ENCODE measurements at regions of chr1 and their contacts with region 1.

Region 1: DNA sequence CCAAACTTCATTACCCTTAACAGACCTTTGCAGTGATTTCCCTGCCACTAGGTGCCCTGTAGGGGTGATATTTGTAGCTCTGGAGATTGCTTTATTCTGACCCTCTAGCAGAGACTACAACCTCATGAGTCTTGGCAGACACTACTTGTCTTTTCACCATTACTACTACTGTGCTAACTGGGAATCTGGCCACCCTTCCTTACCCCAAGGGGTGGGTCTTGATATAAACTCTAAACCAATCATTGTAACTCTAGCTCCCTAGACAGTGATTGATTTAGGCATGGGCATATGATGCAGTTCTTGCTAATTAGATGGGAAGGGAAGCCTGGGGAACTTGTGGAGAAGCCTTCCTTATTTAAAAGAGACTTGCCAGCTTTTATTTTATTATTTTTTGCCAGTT is 3.9 kb downstream of the KPNA6 start:
- DNase-seq: no peak
- ATAC-seq: no peak
- H3K4me3 ChIP-seq: no peak overlapping the region
- H3K27ac ChIP-seq: no peak overlapping the region
- H3K4me1 ChIP-seq: peaks cover 31 to 60% of the 10 kb centered on the region in 2 experiments
- H3K27me3 ChIP-seq: no peaks in the 10 kb centered on the region
- CTCF ChIP-seq: no peak
- POLR2A ChIP-seq: no peak
- RAD21 ChIP-seq: no peak

Region 2: DNA sequence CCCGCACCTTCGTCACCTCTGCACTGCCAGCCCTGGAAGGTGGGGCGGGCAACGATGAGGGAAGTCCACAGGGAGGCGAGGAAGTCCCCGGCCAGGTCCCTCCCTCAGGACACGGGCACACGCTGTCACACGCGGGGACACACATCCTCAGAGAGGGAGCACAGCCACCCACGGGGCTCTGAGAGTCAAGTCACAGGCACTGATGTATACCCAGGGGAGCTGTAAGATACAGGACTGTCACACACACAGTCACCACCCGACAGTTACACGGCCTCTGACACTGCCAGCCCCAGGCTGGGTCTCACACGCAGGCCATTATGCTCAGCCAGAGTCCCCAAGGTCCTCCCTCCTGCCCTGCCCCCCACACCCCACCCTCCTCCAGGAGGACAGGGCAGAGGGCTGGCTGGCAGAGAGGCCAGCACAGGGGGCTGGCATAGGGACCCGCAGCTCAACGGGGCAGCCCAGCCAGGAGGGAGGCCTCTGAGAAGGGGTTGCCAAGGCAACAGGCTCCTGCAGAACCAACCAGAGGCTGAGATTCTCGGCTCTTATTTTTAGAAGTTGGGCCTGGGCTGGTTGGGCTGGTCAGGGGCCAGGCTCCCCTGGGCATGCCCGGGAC is 329.9 kb before region 1 on chr1:
- CTCF ChIA-PET with region 1: no interaction called
- POLR2A ChIA-PET with region 1: no interaction called
- RAD21 ChIA-PET with region 1: no interaction called
- intact Hi-C with region 1: no loop called
- DNase-seq: no peak
- ATAC-seq: no peak
- H3K4me3 ChIP-seq: no peak overlapping the region
- H3K27ac ChIP-seq: no peak overlapping the region
- H3K4me1 ChIP-seq: peaks cover 0 to 15% of the 10 kb centered on the region in 2 experiments; a peak in 2 of 4 replicates
- H3K27me3 ChIP-seq: no peaks in the 10 kb centered on the region
- CTCF ChIP-seq: no peak
- POLR2A ChIP-seq: no peak
- RAD21 ChIP-seq: no peak

Region 3: GRCh38 chr1:32179443-32180185 is 67.8 kb after region 1 on chr1 and contains the start of gene TXLNA:
- CTCF ChIA-PET with region 1: no interaction called
- POLR2A ChIA-PET with region 1: interaction called, 7 read pairs
- RAD21 ChIA-PET with region 1: no interaction called
- intact Hi-C with region 1: loop called (anchors 5 kb)
- DNase-seq: peak; percentile 83
- ATAC-seq: peak; percentile 92
- H3K4me3 ChIP-seq: peak within 1 kb of the TSS; percentile 85 to 86
- H3K27ac ChIP-seq: peak within 1 kb of the TSS; percentile 69
- H3K4me1 ChIP-seq: peaks cover 15 to 32% of the 10 kb centered on the region in 2 experiments
- H3K27me3 ChIP-seq: no peaks in the 10 kb centered on the region
- CTCF ChIP-seq: no peak
- POLR2A ChIP-seq: peak; percentile 83
- RAD21 ChIP-seq: 0 out of 2 replicates have a peak, but pooled peaks have one; percentile 18
- total RNA-seq, gene TXLNA: 37.2 TPM

Region 4: GRCh38 chr1:32255072-32256071 is 143.6 kb after region 1 on chr1:
- CTCF ChIA-PET with region 1: no interaction called
- POLR2A ChIA-PET with region 1: no interaction called
- RAD21 ChIA-PET with region 1: no interaction called
- intact Hi-C with region 1: no loop called
- DNase-seq: no peak
- ATAC-seq: no peak
- H3K4me3 ChIP-seq: no peak overlapping the region
- H3K27ac ChIP-seq: no peak overlapping the region
- H3K4me1 ChIP-seq: no peaks in the 10 kb centered on the region
- H3K27me3 ChIP-seq: no peaks in the 10 kb centered on the region
- CTCF ChIP-seq: no peak
- POLR2A ChIP-seq: no peak
- RAD21 ChIP-seq: no peak

Measured in HCT116 (cell line).